Breast epithelium (tissue), 4 donors: ENCODE measurements at regions of chr2 and their contacts with region 1.

Region 1: GRCh38 chr2:126934786-126935185 is 36.1 kb downstream of the TEX51 start:
- DNase-seq: no peak
- H3K4me3 ChIP-seq: no peak overlapping the region
- H3K27ac ChIP-seq: no peak overlapping the region
- H3K4me1 ChIP-seq: no peaks in the 10 kb centered on the region
- H3K27me3 ChIP-seq: peaks cover 0 to 15% of the 10 kb centered on the region in 2 donors
- CTCF ChIP-seq: no peak
- POLR2A ChIP-seq: no peak

Region 2: DNA sequence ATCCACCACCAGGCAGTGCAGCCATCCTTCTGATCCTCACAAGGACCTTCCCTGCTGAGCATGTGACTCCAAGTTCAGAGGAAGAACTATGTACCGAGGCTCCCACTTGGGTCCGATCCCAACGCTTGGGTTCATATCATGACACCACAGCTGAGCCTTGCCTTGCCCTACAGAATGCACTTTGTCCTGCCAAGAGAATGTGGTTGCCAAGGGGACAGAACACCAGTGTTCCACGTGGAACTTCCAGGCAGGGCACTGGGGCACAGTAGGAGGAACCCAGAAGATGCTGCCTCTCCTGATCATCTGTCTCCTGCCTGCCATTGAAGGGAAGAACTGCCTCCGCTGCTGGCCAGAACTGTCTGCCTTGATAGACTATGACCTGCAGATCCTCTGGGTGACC is 36.1 kb before region 1 on chr2 and contains the start of gene TEX51:
- intact Hi-C with region 1: loop called (anchors 1 kb)
- DNase-seq: peak; percentile 7 to 19
- H3K4me3 ChIP-seq: no peak within 1 kb of the TSS
- H3K27ac ChIP-seq: no peak within 1 kb of the TSS
- H3K4me1 ChIP-seq: no peaks in the 10 kb centered on the region
- H3K27me3 ChIP-seq: no peaks in the 10 kb centered on the region
- CTCF ChIP-seq: no peak
- POLR2A ChIP-seq: no peak
- total RNA-seq, gene TEX51: not detected

Region 3: GRCh38 chr2:126981268-126981875 is 46.6 kb after region 1 on chr2:
- intact Hi-C with region 1: no loop called
- DNase-seq: no peak
- H3K4me3 ChIP-seq: no peak overlapping the region
- H3K27ac ChIP-seq: no peak overlapping the region
- H3K4me1 ChIP-seq: no peaks in the 10 kb centered on the region
- H3K27me3 ChIP-seq: no peaks in the 10 kb centered on the region
- CTCF ChIP-seq: no peak
- POLR2A ChIP-seq: no peak